Psoas muscle (tissue), 8 donors: ENCODE measurements at regions of chr4 and their contacts with region 1.

Region 1: DNA sequence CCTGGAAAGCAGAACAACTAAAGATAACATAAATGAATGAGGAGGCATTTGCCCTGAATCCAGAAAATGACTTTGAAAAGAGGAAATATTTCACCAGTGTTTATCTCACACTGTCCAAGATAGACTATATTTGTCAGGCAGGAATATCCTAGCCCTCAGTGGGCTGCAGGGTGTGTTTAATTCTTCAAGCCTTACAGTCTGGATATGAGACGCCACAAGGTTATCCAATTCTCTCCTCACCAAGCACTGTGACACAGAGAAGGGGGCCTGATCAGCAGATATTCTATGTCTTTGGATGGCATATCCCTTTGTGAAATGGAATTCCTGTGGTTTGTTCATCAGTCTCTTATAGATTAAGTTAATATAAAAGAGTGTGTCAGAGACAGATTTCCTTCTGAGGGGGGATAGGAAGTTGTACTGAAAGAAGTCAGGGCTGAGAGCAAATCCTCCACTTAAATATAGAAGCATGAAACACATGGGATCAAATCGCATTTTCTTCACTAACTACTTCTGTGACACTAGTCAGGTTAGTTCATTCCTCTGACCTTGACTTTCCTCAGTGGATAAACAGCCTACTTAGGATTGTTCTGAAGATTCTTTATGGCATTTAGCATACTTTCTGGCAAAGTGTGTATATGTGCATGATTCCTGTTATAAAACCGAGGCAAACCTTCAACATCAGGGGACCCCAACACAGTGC is 6.8 kb upstream of the G3BP2 start:
- DNase-seq: no peak
- ATAC-seq: peak; percentile 53 to 82 (median 62)
- H3K4me3 ChIP-seq: no peak overlapping the region
- H3K27ac ChIP-seq: peak overlapping the region; percentile 75
- H3K4me1 ChIP-seq: peaks cover 8% of the 10 kb centered on the region
- H3K27me3 ChIP-seq: no peaks in the 10 kb centered on the region
- CTCF ChIP-seq: no peak

Region 2: GRCh38 chr4:75429208-75429607 is 250.8 kb before region 1 on chr4:
- intact Hi-C with region 1: no loop called
- DNase-seq: no peak
- ATAC-seq: no peak
- H3K4me3 ChIP-seq: no peak overlapping the region
- H3K27ac ChIP-seq: no peak overlapping the region
- H3K4me1 ChIP-seq: no peaks in the 10 kb centered on the region
- H3K27me3 ChIP-seq: peaks cover 0 to 3% (median 0%) of the 10 kb centered on the region in 3 donors
- CTCF ChIP-seq: no peak

Region 3: GRCh38 chr4:75715105-75715799 is 35.2 kb after region 1 on chr4:
- intact Hi-C with region 1: loop called in 1 of 2 experiments (anchors 5 kb)
- DNase-seq: no peak
- ATAC-seq: peak; percentile 8 to 29 (median 22)
- H3K4me3 ChIP-seq: no peak overlapping the region
- H3K27ac ChIP-seq: peak overlapping the region; percentile 61
- H3K4me1 ChIP-seq: peaks cover 37% of the 10 kb centered on the region
- H3K27me3 ChIP-seq: no peaks in the 10 kb centered on the region
- CTCF ChIP-seq: no peak

Region 4: GRCh38 chr4:75860571-75861334 is 180.7 kb after region 1 on chr4:
- intact Hi-C with region 1: no loop called
- DNase-seq: no peak
- ATAC-seq: no peak
- H3K4me3 ChIP-seq: no peak overlapping the region
- H3K27ac ChIP-seq: no peak overlapping the region
- H3K4me1 ChIP-seq: no peaks in the 10 kb centered on the region
- H3K27me3 ChIP-seq: no peaks in the 10 kb centered on the region
- CTCF ChIP-seq: no peak